Common myeloid progenitor, CD34-positive (primary cell): ENCODE measurements at regions of chr19 and their contacts with region 1.

Region 1: GRCh38 chr19:6801485-6802086 is 29.1 kb downstream of the VAV1 start:
- DNase-seq: peak; percentile 95 to 96 (median 96)
- H3K4me3 ChIP-seq: peak overlapping the region; percentile 11 to 64 (median 48)
- H3K27ac ChIP-seq: peak overlapping the region; percentile 72 to 87
- H3K4me1 ChIP-seq: peaks cover 3 to 48% (median 41%) of the 10 kb centered on the region in 4 experiments
- H3K27me3 ChIP-seq: no peaks in the 10 kb centered on the region

Region 2: DNA sequence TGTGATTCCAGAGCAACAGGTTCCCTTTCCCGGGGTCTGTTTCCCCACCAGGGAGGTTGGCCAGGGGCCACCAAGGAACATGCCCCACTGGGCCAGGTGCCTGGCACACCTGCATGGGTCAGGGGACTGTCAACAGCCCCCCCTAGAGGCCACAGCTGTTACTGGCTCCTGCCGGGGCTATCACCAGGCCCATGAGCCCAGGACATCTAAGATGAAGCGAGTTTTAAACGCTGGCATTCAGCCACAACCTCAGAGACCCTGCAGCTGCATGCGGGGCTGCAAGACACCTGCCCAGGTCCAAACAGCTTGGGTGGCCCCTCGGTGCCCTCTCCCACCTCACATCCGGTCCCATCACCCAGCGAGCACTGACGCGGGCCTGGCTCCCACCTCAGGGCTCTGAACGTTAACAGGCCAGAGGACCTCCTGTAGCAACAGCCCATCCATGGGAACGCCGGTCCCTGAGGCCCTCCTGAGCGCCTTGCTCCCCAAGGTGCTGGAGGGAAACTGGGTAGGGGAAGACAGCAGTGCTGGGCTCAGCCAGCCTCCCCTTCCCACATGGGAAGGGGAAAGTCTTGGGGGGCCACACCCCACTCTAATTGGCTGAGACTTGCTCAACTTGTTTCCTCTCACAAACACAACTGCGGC is 389.0 kb before region 1 on chr19:
- CTCF ChIA-PET with region 1: no interaction called
- POLR2A ChIA-PET with region 1: no interaction called
- DNase-seq: peak in 2 of 3 donors; percentile 40 to 53
- H3K4me3 ChIP-seq: no peak overlapping the region
- H3K27ac ChIP-seq: no peak overlapping the region
- H3K4me1 ChIP-seq: no peaks in the 10 kb centered on the region
- H3K27me3 ChIP-seq: no peaks in the 10 kb centered on the region

Region 3: DNA sequence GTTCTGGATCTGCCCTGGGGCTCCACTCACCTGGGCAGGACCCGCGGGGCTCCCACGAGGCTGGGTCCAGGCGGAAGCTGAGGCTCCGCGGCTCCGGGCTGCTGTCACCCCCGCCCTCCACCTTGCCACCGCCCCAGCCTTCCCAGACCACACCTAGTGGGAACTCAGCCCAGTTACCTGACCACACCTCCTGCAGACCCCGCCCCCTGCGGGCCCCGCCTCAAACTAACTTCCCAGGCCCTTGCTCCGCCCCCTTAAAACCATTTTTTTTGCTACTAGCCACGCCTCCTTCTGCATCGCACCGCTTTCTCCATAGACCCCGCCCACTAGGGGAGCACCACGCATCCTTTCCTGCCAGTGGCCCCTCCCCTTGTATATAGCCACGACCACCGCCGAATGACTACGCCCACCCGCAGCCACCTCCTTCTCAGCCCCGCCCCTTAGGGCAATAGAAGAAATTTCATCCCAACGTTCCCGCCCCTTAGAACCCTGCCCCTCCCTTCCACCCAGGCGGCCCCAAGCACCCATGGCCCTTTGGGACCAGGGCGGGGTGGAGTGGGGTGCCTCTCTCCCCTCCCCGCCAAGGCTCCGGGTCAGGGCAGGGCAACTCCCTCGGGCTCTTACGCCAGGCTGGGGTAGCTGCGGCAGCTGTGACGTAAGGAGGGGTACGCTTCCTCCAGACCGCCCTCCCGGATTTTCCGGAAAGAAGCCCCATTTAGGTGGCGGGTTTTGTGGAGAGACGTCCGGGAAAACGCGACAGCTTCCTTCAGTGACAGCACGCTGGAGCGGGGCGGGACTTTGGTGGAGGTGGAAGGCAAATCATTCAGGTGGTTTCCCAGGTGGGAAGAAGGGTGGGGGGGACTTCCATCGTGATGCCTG is 34.0 kb before region 1 on chr19 and contains the start of gene SH2D3A:
- CTCF ChIA-PET with region 1: interaction called, 92 read pairs
- POLR2A ChIA-PET with region 1: interaction called, 65 read pairs
- DNase-seq: peak; percentile 94 to 96 (median 96)
- H3K4me3 ChIP-seq: peak within 1 kb of the TSS; percentile 34 to 93 (median 76)
- H3K27ac ChIP-seq: peak within 1 kb of the TSS in 1 of 2 experiments; percentile 51
- H3K4me1 ChIP-seq: peaks cover 2 to 26% (median 21%) of the 10 kb centered on the region in 4 experiments
- H3K27me3 ChIP-seq: no peaks in the 10 kb centered on the region

Region 4: GRCh38 chr19:6779206-6779605 is 22.4 kb before region 1 on chr19:
- CTCF ChIA-PET with region 1: interaction called, 92 read pairs
- POLR2A ChIA-PET with region 1: interaction called, 65 read pairs
- DNase-seq: no peak
- H3K4me3 ChIP-seq: no peak overlapping the region
- H3K27ac ChIP-seq: peak overlapping the region in 1 of 2 experiments; percentile 14
- H3K4me1 ChIP-seq: peaks cover 4 to 20% (median 15%) of the 10 kb centered on the region in 4 experiments
- H3K27me3 ChIP-seq: no peaks in the 10 kb centered on the region

Region 5: DNA sequence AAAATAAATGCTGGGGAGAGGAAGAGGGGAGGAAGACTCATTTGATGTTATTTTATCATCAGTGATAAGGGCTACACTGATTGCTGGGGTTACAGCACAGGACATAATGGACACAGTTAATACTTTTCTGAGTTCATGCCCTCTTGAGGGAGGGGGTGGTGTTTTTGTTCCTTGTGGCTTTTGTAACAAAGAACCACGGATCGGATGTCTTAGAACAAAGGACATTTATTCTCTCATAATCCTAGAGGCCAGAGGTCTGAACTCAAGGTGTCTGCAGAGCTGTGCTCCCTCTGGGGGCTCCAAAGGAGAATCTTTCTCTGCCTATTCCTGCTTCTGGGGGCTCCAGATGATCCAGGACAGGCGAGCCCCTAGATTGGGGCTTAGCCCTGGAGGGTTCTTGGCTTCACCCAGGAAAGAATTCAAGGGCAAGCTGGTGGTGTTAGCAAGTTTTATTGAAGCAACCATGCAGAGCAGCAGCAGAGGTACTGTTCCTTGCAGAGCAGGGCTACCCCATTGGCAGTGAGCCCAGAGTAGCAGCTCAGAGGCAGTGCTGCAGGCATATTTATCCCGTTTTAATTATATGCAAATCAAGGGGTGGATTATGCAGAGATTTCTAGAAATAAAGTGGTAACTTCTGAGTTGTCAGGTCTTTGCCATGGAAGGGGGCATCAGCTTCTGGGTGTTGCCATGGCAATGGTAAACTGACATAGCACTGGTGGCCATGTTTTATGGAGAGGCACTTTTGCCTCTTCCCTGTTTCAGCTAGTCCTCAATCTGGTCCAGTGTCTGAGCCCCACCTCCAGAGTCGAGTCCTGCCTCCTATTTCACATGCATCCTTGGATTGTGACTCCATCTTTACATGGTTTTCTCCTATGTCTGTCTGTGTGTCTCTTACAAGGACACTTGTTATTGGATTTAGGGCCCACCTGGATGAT is 11.1 kb before region 1 on chr19:
- CTCF ChIA-PET with region 1: interaction called, 15 read pairs
- POLR2A ChIA-PET with region 1: interaction called, 6 read pairs
- DNase-seq: no peak
- H3K4me3 ChIP-seq: no peak overlapping the region
- H3K27ac ChIP-seq: no peak overlapping the region
- H3K4me1 ChIP-seq: no peaks in the 10 kb centered on the region
- H3K27me3 ChIP-seq: no peaks in the 10 kb centered on the region

Region 6: GRCh38 chr19:6811906-6812305 is 10.3 kb after region 1 on chr19:
- CTCF ChIA-PET with region 1: interaction called, 62 read pairs
- POLR2A ChIA-PET with region 1: interaction called, 3 read pairs
- DNase-seq: peak; percentile 44 to 70 (median 62)
- H3K4me3 ChIP-seq: no peak overlapping the region
- H3K27ac ChIP-seq: no peak overlapping the region
- H3K4me1 ChIP-seq: peaks cover 0 to 3% (median 0%) of the 10 kb centered on the region in 4 experiments
- H3K27me3 ChIP-seq: no peaks in the 10 kb centered on the region